ENCODE measurements at regions of chr2 and their contacts with region 1.

Region 1: GRCh38 chr2:136384531-136385303 is 266.8 kb upstream of the CXCR4 start:
- DNase-seq: peak; percentile 87
- H3K4me3 ChIP-seq: peak overlapping the region; percentile 19
- H3K27ac ChIP-seq: peak overlapping the region; percentile 93
- H3K4me1 ChIP-seq: peaks cover 87% of the 10 kb centered on the region
- CTCF ChIP-seq: peak; percentile 99

Region 2: GRCh38 chr2:135797497-135798274 is 587.0 kb before region 1 on chr2:
- CTCF ChIA-PET with region 1: interaction called, 4 read pairs
- POLR2A ChIA-PET with region 1: interaction called, 3 read pairs
- intact Hi-C with region 1: loop called (anchors 5 kb)
- DNase-seq: peak; percentile 83
- H3K4me3 ChIP-seq: no peak overlapping the region
- H3K27ac ChIP-seq: no peak overlapping the region
- H3K4me1 ChIP-seq: peaks cover 9% of the 10 kb centered on the region
- CTCF ChIP-seq: peak; percentile 95

Region 3: DNA sequence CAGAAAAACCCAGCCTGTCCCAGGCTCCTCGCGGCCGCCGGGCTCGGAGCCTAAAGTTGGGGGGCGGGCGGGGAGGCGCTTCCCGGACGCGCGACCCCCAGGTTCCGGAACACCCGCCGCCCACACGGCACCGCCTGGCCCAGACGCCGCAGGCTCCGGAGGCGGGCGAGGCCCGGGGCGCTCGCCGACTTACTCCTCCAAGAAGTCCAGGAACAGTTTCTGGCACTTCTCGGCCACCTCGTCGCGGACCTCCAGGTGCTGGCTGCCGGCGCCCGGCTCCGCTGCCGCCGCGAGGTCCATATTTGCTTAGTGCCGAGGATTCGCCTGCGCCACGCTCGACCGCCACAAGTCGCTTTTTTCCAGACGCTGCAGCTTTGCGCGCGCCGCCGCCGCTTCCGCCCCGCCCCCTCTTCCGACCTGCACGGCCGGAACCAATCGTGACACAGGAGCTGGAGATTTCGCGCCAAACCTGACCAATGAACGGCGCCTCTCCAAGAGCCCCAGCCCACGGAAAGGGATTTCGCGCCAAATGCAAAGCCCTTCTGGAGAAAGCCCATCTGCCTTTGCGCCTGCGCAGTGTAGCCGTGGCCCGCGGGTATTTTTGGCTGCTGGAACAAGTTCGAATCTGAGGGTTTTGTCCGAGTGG is 508.5 kb before region 1 on chr2 and contains the start of gene MCM6:
- CTCF ChIA-PET with region 1: no interaction called
- POLR2A ChIA-PET with region 1: interaction called, 4 read pairs
- intact Hi-C with region 1: loop called (anchors 1 kb)
- DNase-seq: peak; percentile 100
- H3K4me3 ChIP-seq: peak within 1 kb of the TSS; percentile 84
- H3K27ac ChIP-seq: peak within 1 kb of the TSS; percentile 62
- H3K4me1 ChIP-seq: peaks cover 26% of the 10 kb centered on the region
- CTCF ChIP-seq: 0 out of 2 replicates have a peak, but pooled peaks have one; percentile 15
- total RNA-seq, gene MCM6: 61.2 and 66.1 TPM in 2 replicates

Region 4: DNA sequence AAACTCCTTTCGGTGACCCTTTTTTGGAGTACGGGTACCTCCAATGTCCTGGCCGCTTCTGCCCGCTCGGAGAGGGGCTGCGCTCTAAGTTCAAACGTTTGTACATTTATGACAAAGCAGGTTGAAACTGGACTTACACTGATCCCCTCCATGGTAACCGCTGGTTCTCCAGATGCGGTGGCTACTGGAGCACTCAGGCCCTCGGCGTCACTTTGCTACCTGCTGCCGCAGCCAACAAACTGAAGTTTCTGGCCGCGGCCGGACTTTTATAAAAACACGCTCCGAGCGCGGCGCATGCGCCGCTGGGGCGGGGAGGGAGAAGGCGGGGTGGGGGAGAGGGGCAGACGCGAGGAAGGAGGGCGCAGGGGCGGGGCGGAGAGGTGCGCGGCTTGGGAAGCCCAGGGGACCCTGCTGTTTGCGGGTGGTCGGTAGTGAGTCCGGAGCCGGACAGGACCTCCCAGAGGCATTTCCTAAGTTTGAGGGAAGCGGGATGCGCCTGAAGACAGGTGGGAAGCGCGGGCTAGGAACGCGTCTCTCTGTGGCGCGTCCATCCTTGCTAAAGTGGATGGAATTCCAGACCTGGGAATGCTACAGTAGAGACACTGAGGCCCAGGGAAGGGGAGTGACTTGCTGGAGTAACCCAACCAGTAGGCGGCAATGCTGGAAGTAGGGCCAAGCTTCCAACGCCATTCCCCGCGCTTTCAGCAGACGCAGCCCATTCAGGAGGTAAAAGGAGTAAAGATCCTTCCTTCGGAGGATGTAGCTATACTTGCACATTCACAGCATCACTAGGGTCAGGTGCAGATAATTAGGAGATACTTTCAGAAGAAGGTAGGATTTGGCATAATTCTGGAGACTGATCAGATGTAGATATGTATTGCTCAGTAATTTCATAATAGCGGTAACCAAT is 266.6 kb before region 1 on chr2 and contains the start of gene CXCR4:
- CTCF ChIA-PET with region 1: interaction called, 6 read pairs
- POLR2A ChIA-PET with region 1: interaction called, 6 read pairs
- intact Hi-C with region 1: loop called (anchors 1 kb)
- DNase-seq: peak; percentile 89
- H3K4me3 ChIP-seq: peak within 1 kb of the TSS; percentile 92
- H3K27ac ChIP-seq: peak within 1 kb of the TSS; percentile 92
- H3K4me1 ChIP-seq: peaks cover 66% of the 10 kb centered on the region
- CTCF ChIP-seq: peak; percentile 33; the same call in 1 of the 2 replicates
- total RNA-seq, gene CXCR4: 367 and 432 TPM in 2 replicates

Region 5: DNA sequence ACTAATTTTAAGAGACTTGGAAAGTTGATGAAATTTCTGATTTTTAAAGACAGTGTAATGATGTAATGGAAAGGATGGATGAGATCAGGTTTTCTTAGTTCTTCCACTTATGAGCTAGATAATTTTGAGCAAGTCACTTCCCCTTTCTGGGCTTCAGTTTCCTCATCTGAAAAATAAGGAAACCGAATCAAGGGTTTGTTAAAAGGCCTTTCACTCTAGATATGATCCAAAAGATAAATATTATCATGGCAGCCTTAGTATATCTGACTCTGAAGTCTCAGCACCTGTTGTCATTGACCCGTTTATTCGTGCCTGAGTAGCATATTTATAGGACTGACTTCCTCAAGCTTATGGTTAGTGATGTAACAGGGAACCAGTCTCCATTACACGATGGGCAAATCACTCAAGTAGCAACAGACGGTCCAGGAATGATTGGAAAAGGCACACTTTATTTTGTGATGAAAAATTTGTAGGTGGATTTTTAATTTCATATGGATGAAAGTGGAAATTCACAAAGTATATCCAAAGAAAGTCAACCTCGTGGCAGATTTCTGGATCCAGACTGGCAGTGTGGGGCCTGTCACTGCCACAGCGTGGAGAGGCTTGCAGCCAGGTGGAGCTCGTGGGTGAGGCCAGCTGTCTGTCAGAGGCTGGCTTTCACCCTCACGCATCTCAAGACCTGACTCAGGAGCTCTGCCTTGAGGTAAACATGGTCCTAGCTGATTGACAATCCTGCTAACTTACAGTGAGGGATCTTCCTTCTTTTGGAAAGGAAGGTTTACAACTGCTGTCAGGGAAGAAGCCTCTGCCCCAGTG is 128.9 kb before region 1 on chr2:
- CTCF ChIA-PET with region 1: interaction called, 20 read pairs
- POLR2A ChIA-PET with region 1: interaction called, 30 read pairs
- intact Hi-C with region 1: no loop called
- DNase-seq: peak; percentile 85
- H3K4me3 ChIP-seq: peak overlapping the region; percentile 26
- H3K27ac ChIP-seq: peak overlapping the region; percentile 79
- H3K4me1 ChIP-seq: peaks cover 72% of the 10 kb centered on the region
- CTCF ChIP-seq: peak; percentile 80

Region 6: DNA sequence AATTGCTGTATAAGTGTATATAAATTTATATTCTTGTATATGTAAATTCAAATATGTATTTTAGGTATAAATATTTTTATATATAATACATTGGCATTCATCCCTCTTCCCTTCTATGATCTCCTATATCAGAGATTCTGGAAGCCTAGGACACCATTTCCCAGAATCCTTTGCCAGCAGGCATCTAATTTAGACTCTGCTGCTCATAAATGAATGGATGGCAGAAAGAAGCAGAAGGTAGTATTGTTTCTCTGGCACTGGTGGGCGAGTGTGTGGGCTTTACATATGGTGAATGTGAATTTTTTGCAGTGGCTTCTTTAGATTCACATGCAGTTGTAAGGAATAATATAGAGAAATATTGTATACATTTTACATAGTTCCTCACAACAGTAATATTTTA is 165.5 kb after region 1 on chr2:
- CTCF ChIA-PET with region 1: no interaction called
- POLR2A ChIA-PET with region 1: no interaction called
- intact Hi-C with region 1: no loop called
- DNase-seq: no peak
- H3K4me3 ChIP-seq: no peak overlapping the region
- H3K27ac ChIP-seq: no peak overlapping the region
- H3K4me1 ChIP-seq: no peaks in the 10 kb centered on the region
- CTCF ChIP-seq: no peak

Measured in OCI-LY7 (cell line).